ENCODE measurements at regions of chr19 and their contacts with region 1.

Region 1: GRCh38 chr19:860481-861101 is 1.1 kb downstream of the CFD start:
- DNase-seq: peak; percentile 38 to 86 (median 63)
- ATAC-seq: peak; percentile 45
- H3K4me3 ChIP-seq: peak overlapping the region; percentile 22 to 46
- H3K4me3 Mint-ChIP-seq: peak overlapping the region; percentile 60
- H3K27ac ChIP-seq: no peak overlapping the region
- H3K27ac Mint-ChIP-seq: no peak overlapping the region
- H3K4me1 ChIP-seq: peaks cover 20% of the 10 kb centered on the region
- H3K4me1 Mint-ChIP-seq: peaks cover 17% of the 10 kb centered on the region
- H3K27me3 ChIP-seq: peaks cover 6 to 9% of the 10 kb centered on the region in 2 experiments
- H3K27me3 Mint-ChIP-seq: peaks cover 9% of the 10 kb centered on the region
- CTCF ChIP-seq: no peak

Region 2: DNA sequence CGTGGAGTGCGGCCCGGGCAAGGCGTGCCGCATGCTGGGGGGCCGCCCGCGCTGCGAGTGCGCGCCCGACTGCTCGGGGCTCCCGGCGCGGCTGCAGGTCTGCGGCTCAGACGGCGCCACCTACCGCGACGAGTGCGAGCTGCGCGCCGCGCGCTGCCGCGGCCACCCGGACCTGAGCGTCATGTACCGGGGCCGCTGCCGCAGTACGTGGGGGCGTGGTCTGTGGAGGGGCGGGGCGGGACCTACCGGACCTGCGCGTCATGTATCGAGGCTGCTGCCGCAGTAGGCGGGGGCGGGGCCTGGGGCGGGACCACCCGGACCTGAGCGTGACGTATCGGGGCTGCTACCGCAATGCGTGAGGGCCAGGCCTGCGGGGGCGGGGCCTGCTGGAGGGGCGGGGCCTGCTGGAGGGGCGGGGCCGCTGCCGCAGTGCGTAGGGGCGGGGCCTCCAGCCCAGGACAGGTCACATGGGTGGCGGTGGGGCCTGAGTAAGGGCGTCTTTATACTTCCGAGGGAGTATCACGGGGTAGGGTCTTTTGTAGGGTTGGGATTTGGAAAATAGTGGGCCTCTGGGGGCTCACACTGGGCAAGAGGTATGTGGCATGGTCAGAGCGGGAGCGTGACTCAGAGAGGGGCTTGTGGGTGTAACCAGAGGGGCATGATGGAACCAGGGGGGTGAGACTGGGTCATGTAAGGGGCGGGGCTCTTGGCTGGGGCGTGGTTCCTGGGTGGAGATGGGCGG is 180.1 kb before region 1 on chr19:
- CTCF ChIA-PET with region 1: no interaction called
- POLR2A ChIA-PET with region 1: no interaction called
- intact Hi-C with region 1: loop called in 1 of 2 experiments (anchors 2 kb)
- DNase-seq: peak; percentile 99 to 100 (median 100)
- ATAC-seq: peak; percentile 79
- H3K4me3 ChIP-seq: peak overlapping the region; percentile 59 to 94
- H3K4me3 Mint-ChIP-seq: peak overlapping the region; percentile 91
- H3K27ac ChIP-seq: peak overlapping the region; percentile 73 to 88
- H3K27ac Mint-ChIP-seq: peak overlapping the region; percentile 97
- H3K4me1 ChIP-seq: peaks cover 20% of the 10 kb centered on the region
- H3K4me1 Mint-ChIP-seq: peaks cover 8% of the 10 kb centered on the region
- H3K27me3 ChIP-seq: peaks cover 0 to 16% of the 10 kb centered on the region in 2 experiments
- H3K27me3 Mint-ChIP-seq: peaks cover 4% of the 10 kb centered on the region
- CTCF ChIP-seq: peak; percentile 37

Region 3: GRCh38 chr19:879711-880438 is 19.3 kb after region 1 on chr19:
- CTCF ChIA-PET with region 1: interaction called, 15 read pairs
- POLR2A ChIA-PET with region 1: interaction called, 3 read pairs
- intact Hi-C with region 1: no loop called
- DNase-seq: no peak
- ATAC-seq: no peak
- H3K4me3 ChIP-seq: no peak overlapping the region
- H3K4me3 Mint-ChIP-seq: no peak overlapping the region
- H3K27ac ChIP-seq: no peak overlapping the region
- H3K27ac Mint-ChIP-seq: no peak overlapping the region
- H3K4me1 ChIP-seq: no peaks in the 10 kb centered on the region
- H3K4me1 Mint-ChIP-seq: peaks cover 2% of the 10 kb centered on the region
- H3K27me3 ChIP-seq: no peaks in the 10 kb centered on the region
- H3K27me3 Mint-ChIP-seq: no peaks in the 10 kb centered on the region
- CTCF ChIP-seq: no peak

Region 4: GRCh38 chr19:907183-907853 is 46.7 kb after region 1 on chr19:
- CTCF ChIA-PET with region 1: interaction called, 47 read pairs
- POLR2A ChIA-PET with region 1: interaction called, 20 read pairs
- intact Hi-C with region 1: no loop called
- DNase-seq: peak in 5 of 9 experiments; percentile 45 to 65 (median 51)
- ATAC-seq: no peak
- H3K4me3 ChIP-seq: no peak overlapping the region
- H3K4me3 Mint-ChIP-seq: peak overlapping the region; percentile 61
- H3K27ac ChIP-seq: peak overlapping the region; percentile 47 to 56
- H3K27ac Mint-ChIP-seq: peak overlapping the region; percentile 100
- H3K4me1 ChIP-seq: peaks cover 64% of the 10 kb centered on the region
- H3K4me1 Mint-ChIP-seq: peaks cover 56% of the 10 kb centered on the region
- H3K27me3 ChIP-seq: no peaks in the 10 kb centered on the region
- H3K27me3 Mint-ChIP-seq: no peaks in the 10 kb centered on the region
- CTCF ChIP-seq: no peak

Region 5: DNA sequence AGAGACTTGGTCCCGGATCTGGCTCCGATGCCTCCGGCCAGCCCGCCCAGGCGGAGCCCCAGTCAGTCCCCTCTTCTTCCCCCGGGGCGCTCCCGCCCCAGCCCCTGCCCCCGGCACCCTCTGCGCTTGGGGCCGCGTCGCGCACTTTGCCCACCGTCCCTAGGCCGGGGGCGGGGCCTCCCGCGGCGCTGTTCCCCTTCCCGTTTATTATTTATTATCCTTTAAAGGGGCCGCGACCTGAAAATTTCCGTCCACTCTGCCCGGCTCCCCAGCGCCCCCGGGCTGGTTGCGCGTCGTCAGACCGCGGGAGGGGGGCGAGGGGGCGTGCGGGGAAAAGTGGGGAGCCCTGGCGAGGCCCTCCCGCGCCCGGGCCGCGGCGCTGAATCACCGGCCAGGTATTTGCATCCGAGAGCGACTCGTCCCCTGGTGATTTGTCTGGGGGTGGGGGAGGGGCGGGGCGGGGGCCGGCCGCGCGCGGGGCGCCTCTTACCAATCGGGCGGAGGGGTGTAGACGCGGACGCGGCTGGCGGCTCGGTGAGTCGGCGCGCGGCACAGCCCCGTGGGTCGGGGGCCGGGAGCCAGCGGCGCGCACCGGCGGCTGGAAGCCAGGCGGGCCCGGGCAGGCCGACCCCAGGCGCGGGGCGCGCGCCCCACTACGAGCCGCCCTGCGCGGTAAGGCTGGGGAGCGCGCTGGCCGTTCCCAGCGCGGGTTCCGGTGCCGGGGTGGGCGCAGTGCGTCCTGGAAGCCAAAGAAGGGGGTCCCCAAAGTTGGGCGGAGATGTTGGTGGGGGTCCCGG is 65.1 kb after region 1 on chr19 and contains the start of gene ARID3A:
- CTCF ChIA-PET with region 1: interaction called, 70 read pairs
- POLR2A ChIA-PET with region 1: interaction called, 23 read pairs
- intact Hi-C with region 1: loop called (anchors 1 kb)
- DNase-seq: peak in 8 of 9 experiments; percentile 62 to 88 (median 76)
- ATAC-seq: peak; percentile 67
- H3K4me3 ChIP-seq: peak within 1 kb of the TSS; percentile 73 to 78
- H3K4me3 Mint-ChIP-seq: peak within 1 kb of the TSS; percentile 80
- H3K27ac ChIP-seq: peak within 1 kb of the TSS; percentile 42 to 74
- H3K27ac Mint-ChIP-seq: no peak within 1 kb of the TSS
- H3K4me1 ChIP-seq: peaks cover 20% of the 10 kb centered on the region
- H3K4me1 Mint-ChIP-seq: peaks cover 17% of the 10 kb centered on the region
- H3K27me3 ChIP-seq: no peaks in the 10 kb centered on the region
- H3K27me3 Mint-ChIP-seq: no peaks in the 10 kb centered on the region
- CTCF ChIP-seq: no peak
- total RNA-seq, gene ARID3A: 2.0 to 2.7 TPM

Region 6: GRCh38 chr19:1249298-1249989 is 388.9 kb after region 1 on chr19:
- CTCF ChIA-PET with region 1: no interaction called
- POLR2A ChIA-PET with region 1: no interaction called
- intact Hi-C with region 1: loop called in 1 of 2 experiments (anchors 10 kb)
- DNase-seq: peak; percentile 89 to 98 (median 95)
- ATAC-seq: peak; percentile 55
- H3K4me3 ChIP-seq: peak overlapping the region; percentile 86 to 88
- H3K4me3 Mint-ChIP-seq: peak overlapping the region; percentile 87
- H3K27ac ChIP-seq: peak overlapping the region; percentile 83 to 84
- H3K27ac Mint-ChIP-seq: peak overlapping the region; percentile 88
- H3K4me1 ChIP-seq: peaks cover 31% of the 10 kb centered on the region
- H3K4me1 Mint-ChIP-seq: peaks cover 10% of the 10 kb centered on the region
- H3K27me3 ChIP-seq: no peaks in the 10 kb centered on the region
- H3K27me3 Mint-ChIP-seq: no peaks in the 10 kb centered on the region
- CTCF ChIP-seq: no peak

Measured in CD8-positive, alpha-beta T cell (primary cell).